ENCODE measurements at regions of chr1 and their contacts with region 1.

Region 1: DNA sequence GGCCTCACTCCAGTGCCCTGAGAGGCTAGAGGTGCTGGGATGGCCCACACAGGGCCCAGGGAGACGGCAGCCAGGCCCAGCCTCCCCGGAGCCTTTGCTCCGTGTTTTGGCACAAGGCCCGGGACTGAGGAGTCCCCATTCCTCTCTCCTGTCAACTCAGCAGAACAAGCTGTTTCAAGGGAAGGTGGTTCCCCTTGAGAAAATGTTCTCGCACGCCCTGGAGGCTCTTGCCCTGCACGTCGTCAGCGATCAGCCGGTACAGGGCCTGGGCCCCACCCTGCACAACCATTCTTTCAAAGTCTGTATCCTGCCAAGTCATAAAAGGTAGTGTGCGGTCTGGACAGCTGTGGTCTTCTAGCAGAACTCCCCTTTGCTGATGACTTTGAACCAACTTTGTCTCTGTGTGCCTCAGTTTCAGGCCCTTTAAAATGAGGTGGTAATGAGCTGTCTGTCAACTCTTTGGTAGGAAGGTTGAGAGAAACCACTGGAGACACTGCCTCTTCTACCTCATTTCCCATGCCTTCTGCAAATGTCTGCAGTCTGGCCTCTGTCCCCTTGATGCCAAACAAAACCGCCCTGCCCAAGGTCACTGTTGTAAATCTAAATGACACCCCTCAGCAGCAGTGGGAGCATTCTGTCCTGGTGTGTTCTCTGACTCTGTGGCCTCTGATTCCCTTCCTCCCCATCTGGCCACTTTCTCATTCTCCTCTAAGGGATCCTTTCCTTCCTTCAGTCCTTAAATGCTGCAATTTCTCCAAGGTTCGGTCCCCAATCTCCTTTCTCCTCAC is 138.6 kb upstream of the JUN start:
- DNase-seq: peak; percentile 65
- H3K4me3 Mint-ChIP-seq: peak overlapping the region; percentile 44
- H3K27ac Mint-ChIP-seq: peak overlapping the region; percentile 64
- H3K4me1 Mint-ChIP-seq: peaks cover 31% of the 10 kb centered on the region
- H3K27me3 Mint-ChIP-seq: peaks cover 2% of the 10 kb centered on the region

Region 2: DNA sequence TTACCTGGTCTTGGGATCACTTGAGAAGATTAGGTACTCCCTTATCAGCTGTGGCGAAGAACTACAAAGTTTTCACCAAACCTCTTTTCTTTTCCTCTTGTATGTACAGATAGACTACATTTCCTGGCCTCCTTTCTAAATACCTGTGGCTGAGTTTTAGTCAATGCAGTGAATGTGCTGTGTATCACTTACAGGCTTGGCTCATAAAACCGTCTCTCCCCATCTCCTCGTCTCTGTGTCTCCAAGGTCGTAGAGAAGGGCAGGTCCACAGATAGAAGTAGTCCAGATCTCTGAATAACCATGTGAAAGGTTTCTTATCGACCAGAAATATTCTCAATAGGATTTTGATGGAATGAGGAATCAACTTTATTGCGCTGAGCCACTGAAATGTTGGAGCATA is 129.7 kb before region 1 on chr1:
- intact Hi-C with region 1: no loop called
- DNase-seq: no peak
- H3K4me3 Mint-ChIP-seq: no peak overlapping the region
- H3K27ac Mint-ChIP-seq: no peak overlapping the region
- H3K4me1 Mint-ChIP-seq: peaks cover 42% of the 10 kb centered on the region
- H3K27me3 Mint-ChIP-seq: peaks cover 2% of the 10 kb centered on the region

Region 3: GRCh38 chr1:58861506-58861905 is 61.0 kb before region 1 on chr1:
- intact Hi-C with region 1: no loop called
- DNase-seq: no peak
- H3K4me3 Mint-ChIP-seq: no peak overlapping the region
- H3K27ac Mint-ChIP-seq: no peak overlapping the region
- H3K4me1 Mint-ChIP-seq: peaks cover 56% of the 10 kb centered on the region
- H3K27me3 Mint-ChIP-seq: no peaks in the 10 kb centered on the region

Region 4: GRCh38 chr1:58968360-58968952 is 46.0 kb after region 1 on chr1:
- intact Hi-C with region 1: loop called (anchors 2 kb)
- DNase-seq: peak; percentile 42
- H3K4me3 Mint-ChIP-seq: peak overlapping the region; percentile 77
- H3K27ac Mint-ChIP-seq: peak overlapping the region; percentile 98
- H3K4me1 Mint-ChIP-seq: peaks cover 76% of the 10 kb centered on the region
- H3K27me3 Mint-ChIP-seq: no peaks in the 10 kb centered on the region

Region 5: GRCh38 chr1:58986996-58987767 is 64.7 kb after region 1 on chr1:
- intact Hi-C with region 1: no loop called
- DNase-seq: no peak
- H3K4me3 Mint-ChIP-seq: no peak overlapping the region
- H3K27ac Mint-ChIP-seq: peak overlapping the region; percentile 22
- H3K4me1 Mint-ChIP-seq: peaks cover 44% of the 10 kb centered on the region
- H3K27me3 Mint-ChIP-seq: peaks cover 2% of the 10 kb centered on the region

Region 6: DNA sequence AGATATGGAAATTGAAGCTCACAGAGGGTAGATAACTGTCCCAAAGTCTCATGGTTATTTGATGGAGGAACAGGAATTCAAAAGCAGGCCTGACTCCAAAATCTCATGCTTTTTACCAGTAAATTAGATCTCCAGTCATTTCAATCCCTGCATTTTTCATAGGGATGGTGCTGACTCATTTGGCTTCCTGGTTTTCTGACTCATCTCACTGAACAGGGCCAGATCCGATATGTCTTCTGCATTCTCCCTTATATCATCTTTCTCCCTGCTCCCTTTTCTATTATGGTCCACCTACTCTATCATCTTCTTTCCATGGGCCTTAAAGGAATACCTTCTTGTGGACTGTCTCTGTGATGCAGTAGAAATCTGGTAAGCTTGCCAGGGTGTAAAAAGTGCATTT is 561.6 kb after region 1 on chr1:
- intact Hi-C with region 1: no loop called
- DNase-seq: no peak
- H3K4me3 Mint-ChIP-seq: no peak overlapping the region
- H3K27ac Mint-ChIP-seq: no peak overlapping the region
- H3K4me1 Mint-ChIP-seq: peaks cover 14% of the 10 kb centered on the region
- H3K27me3 Mint-ChIP-seq: no peaks in the 10 kb centered on the region

Measured in activated T-helper 1 cell treated with anti-CD3 and anti-CD28 coated beads, Interleukin-12 subunit alpha, Interleukin-12 subunit beta, Interleukin-2, Interleukin-4 antibody, amounts not matched to agents 30 ng/mL and 10 ng/mL and 1 ng/mL, durations not matched to agents 14 hours and 24 hours and 36 hours (primary cell).